Head of caudate nucleus (tissue), 42 donors: ENCODE measurements at regions of chr5 and their contacts with region 1.

Region 1: GRCh38 chr5:41270423-41271251 is 57.3 kb upstream of the C6 start:
- DNase-seq: peak in 39 of 42 donors; percentile 4 to 84 (median 60)

Region 2: DNA sequence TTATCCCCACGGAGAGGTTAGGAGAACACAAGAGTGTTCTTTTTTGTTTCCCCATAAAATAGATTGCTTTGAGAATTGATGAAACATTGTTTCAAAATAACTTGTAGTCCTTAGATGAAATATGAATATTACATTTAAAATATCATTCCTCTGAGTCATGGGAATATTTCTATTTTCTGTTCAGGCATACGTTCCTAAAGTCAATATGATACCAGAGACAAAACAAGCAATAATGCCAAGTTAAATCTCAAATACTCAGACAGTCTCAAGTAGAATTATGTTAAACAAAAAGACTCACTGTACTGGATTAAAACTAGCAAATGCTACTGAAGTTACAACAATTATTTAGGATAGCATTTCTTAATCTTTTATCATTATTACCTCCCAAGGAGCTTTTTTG is 54.4 kb after region 1 on chr5:
- intact Hi-C with region 1: loop called (anchors 10 kb)
- DNase-seq: no peak

Region 3: DNA sequence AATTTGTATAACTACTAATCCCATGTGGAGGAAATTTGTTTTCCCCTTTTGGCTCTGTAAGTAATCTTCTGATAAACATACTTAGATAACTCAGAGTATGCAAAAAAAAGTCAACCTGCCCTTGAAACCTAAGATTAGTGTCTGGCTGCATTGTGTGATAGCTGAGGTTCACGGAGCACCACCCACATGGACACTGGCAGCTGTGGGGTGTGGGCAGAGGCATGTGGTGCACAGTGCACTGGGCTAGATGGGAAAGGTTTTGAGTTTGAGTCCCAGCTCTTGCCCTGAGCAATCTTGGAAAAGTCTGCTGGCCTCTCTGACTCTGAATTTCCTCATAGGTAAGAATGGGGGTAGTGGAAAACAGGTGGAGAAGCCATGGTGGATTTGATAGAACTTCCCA is 164.6 kb after region 1 on chr5:
- intact Hi-C with region 1: no loop called
- DNase-seq: no peak

Region 4: GRCh38 chr5:41510176-41510831 is 239.7 kb after region 1 on chr5 and contains the start of gene PLCXD3:
- intact Hi-C with region 1: loop called (anchors 10 kb)
- DNase-seq: peak in 29 of 42 donors; percentile 3 to 45 (median 17)